Activated B cell treated with CpG ODN at 0.5 μM for 24 hours (primary cell): ENCODE measurements at regions of chr15 and their contacts with region 1.

Region 1: GRCh38 chr15:69468241-69469121 is 15.9 kb downstream of the RPLP1 start:
- DNase-seq: no peak
- ATAC-seq: peak; percentile 74
- H3K4me3 Mint-ChIP-seq: peak overlapping the region; percentile 1
- H3K27ac Mint-ChIP-seq: no peak overlapping the region
- H3K4me1 Mint-ChIP-seq: peaks cover 8% of the 10 kb centered on the region
- H3K27me3 Mint-ChIP-seq: no peaks in the 10 kb centered on the region
- CTCF ChIP-seq: no peak

Region 2: GRCh38 chr15:69058830-69059556 is 409.5 kb before region 1 on chr15:
- CTCF ChIA-PET with region 1: no interaction called
- POLR2A ChIA-PET with region 1: no interaction called
- intact Hi-C with region 1: loop called (anchors 5 kb)
- DNase-seq: peak; percentile 32
- ATAC-seq: peak; percentile 25
- H3K4me3 Mint-ChIP-seq: no peak overlapping the region
- H3K27ac Mint-ChIP-seq: no peak overlapping the region
- H3K4me1 Mint-ChIP-seq: peaks cover 13% of the 10 kb centered on the region
- H3K27me3 Mint-ChIP-seq: peaks cover 12% of the 10 kb centered on the region
- CTCF ChIP-seq: no peak

Region 3: DNA sequence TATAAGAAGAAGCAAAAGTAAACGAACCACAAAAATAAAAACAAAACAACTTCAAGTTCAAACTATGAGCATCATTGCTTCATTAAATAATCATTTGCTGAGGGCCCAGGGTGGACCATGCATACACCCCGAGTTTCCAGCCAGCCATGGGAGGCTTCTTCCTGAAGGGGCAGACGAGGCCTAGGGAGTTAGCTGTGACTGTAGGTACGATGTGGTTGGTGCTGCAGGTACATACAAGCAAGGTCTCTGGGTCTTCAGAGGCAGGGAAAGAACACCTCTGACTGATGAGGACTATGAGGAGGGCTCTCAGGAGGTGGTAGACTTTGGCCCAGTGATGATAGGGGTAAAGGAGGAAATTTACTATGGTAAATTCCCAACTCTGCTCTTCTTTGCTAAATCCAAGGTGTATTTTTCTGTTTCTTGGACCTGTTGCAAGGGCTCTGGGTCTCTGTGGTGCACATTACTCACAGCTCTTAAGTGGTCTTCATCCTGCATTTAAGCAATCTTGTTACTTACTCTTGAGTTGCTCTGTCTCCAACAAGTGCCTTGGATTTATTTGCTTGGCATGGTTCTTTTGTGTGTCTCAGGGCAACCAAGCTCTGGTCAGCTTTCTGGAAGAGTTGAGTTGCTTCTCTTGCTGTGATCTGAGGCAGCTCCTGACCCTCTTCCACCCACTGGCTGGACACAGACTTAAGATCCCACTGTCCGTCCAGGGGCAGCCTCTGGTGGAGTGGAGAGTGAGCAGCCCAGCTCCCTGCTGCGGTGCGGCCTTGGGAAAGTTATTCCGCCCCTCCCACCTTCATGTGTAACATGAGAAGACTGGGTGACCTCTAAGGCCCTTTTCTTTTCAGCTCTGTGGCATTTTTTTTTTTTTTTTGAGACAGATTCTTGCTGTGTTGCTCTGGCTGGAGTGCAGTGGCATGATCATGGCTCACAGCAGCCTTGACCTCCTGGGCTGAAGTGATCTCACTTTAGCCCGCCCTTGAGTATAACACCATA is 110.4 kb before region 1 on chr15:
- CTCF ChIA-PET with region 1: no interaction called
- POLR2A ChIA-PET with region 1: no interaction called
- intact Hi-C with region 1: no loop called
- DNase-seq: no peak
- ATAC-seq: no peak
- H3K4me3 Mint-ChIP-seq: no peak overlapping the region
- H3K27ac Mint-ChIP-seq: no peak overlapping the region
- H3K4me1 Mint-ChIP-seq: no peaks in the 10 kb centered on the region
- H3K27me3 Mint-ChIP-seq: peaks cover 6% of the 10 kb centered on the region
- CTCF ChIP-seq: no peak